HepG2 (cell line): ENCODE measurements at regions of chr3 and their contacts with region 1.

Region 1: DNA sequence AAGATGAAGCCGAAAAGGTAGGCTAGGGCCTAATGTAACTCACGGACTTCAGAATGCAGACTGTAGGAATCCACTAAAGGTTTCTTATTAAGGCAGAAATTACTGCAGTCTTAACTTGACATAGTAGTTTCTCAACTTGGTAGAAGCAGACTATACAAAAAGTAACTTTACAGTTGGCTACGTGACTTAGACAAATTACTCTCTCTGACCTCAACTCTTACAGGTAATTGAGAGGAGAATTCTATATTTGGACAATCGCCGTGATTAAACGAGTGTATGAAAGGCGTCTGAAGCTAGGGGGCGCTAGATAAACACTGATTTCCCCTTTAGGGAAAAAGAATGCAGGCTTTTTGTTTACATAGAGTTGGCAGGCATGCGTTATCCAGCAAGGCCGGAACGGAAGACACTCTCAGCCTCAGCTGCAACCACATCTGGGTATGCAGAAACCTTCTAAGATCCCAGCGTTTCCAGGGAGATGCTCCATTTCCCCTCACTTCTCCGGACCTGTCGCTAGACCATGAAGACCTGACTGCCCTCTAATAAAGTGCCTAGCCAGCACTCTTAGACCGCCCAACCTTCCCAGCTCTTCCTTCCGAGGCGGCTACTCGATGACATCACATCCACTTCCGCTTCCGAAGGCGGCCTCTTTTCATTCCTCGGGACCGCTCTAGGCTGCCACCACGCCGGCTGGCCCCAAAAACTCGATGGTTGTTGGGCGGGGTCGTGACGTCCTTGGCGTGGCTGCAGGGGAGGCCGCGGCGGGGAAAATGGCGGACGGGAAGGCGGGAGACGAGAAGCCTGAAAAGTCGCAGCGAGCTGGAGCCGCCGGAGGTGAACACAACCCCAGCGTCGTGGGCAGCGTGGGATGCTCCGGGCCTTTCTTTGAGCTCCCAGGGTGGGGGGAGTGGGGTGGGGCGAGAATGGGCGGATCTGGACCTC is at the start of gene PCNP:
- DNase-seq: peak; percentile 97
- ATAC-seq: peak; percentile 90
- H3K4me3 ChIP-seq: peak within 1 kb of the TSS; percentile 83 to 98 (median 97)
- H3K27ac ChIP-seq: peak within 1 kb of the TSS; percentile 89
- H3K4me1 ChIP-seq: peaks cover 57% of the 10 kb centered on the region
- H3K27me3 ChIP-seq: no peaks in the 10 kb centered on the region; a peak in 1 of 5 replicates
- CTCF ChIP-seq: peak; percentile 80
- EP300 ChIP-seq: no peak; a peak in 3 of 4 replicates
- POLR2A ChIP-seq: peak; percentile 90 to 92
- RAD21 ChIP-seq: peak; percentile 65
- total RNA-seq, gene PCNP: 78.2 and 112 TPM in 2 replicates

Region 2: GRCh38 chr3:101466465-101467309 is 107.0 kb before region 1 on chr3:
- CTCF ChIA-PET with region 1: no interaction called
- POLR2A ChIA-PET with region 1: interaction called, 14 read pairs
- in situ Hi-C with region 1: no loop called
- intact Hi-C with region 1: no loop called
- DNase-seq: peak; percentile 53
- ATAC-seq: peak; percentile 97
- H3K4me3 ChIP-seq: peak overlapping the region; percentile 54 to 71 (median 70)
- H3K27ac ChIP-seq: peak overlapping the region; percentile 69
- H3K4me1 ChIP-seq: peaks cover 26% of the 10 kb centered on the region
- H3K27me3 ChIP-seq: no peaks in the 10 kb centered on the region
- CTCF ChIP-seq: no peak
- EP300 ChIP-seq: no peak
- POLR2A ChIP-seq: peak; percentile 25 to 44; a peak in 2 of 4 replicates
- RAD21 ChIP-seq: no peak

Region 3: DNA sequence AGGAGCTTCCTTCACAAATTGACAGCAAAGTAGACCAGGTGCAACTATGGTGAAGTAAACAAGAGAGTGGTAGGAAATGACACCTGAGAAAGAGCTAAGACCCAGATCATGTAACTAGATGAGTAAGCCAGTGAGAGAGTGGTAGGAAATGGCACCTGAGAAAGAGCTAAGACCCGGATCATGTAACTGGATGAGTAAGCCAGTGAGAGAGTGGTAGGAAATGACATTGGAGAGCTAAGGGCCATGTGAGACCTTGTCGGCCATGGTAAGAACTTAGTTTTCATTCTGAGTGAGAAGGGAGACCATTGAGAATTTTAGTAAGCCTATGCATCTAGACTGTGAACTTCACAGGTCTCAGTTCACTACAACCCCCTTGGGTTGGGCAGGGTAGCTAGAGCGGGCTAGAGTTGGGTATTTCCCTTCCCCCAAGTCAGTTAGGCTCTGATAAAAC is 55.3 kb before region 1 on chr3:
- CTCF ChIA-PET with region 1: no interaction called
- POLR2A ChIA-PET with region 1: interaction called, 25 read pairs
- in situ Hi-C with region 1: loop called (anchors 5 kb)
- intact Hi-C with region 1: loop called (anchors 1 kb)
- DNase-seq: peak; percentile 29
- ATAC-seq: peak; percentile 64
- H3K4me3 ChIP-seq: no peak overlapping the region; a peak in 1 of 6 replicates
- H3K27ac ChIP-seq: no peak overlapping the region
- H3K4me1 ChIP-seq: peaks cover 45% of the 10 kb centered on the region
- H3K27me3 ChIP-seq: no peaks in the 10 kb centered on the region
- CTCF ChIP-seq: no peak
- EP300 ChIP-seq: no peak
- POLR2A ChIP-seq: no peak
- RAD21 ChIP-seq: no peak

Region 4: DNA sequence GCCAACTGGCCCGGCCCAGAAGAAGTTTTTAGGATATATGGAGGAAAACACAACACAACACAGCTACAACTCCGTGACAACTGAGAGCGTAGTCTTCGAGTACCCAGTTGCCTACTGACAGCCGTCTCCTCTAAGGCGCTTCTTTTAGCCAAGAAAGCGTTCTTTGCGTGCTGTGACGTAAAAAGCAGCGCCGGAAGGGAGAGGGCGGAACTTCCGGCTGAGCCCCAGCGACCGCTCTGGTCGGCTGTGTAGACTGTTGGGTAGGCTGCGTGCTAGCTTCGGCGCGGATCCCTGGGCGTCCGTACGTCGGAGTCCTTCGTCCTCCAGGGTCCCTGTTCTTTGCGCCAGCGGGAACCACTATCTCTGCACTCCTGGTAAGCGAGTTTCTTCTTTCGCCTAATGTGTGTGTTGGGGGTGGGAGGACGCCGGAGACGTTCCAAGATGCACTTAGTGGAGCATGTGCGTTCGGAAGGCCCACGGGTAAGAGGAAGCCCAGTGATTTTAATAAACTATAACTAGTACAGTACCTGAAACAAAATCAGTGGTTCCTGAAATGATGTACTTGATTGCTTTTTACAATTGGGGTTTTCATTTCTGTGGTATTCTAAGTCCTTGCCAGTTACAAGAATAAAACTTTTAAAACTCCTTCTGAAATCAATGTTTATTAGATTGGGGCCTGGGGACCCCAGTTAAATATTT is 11.9 kb before region 1 on chr3 and contains the start of gene TRMT10C:
- CTCF ChIA-PET with region 1: no interaction called
- POLR2A ChIA-PET with region 1: interaction called, 38 read pairs
- in situ Hi-C with region 1: no loop called
- intact Hi-C with region 1: no loop called
- DNase-seq: peak; percentile 80
- ATAC-seq: peak; percentile 100
- H3K4me3 ChIP-seq: peak within 1 kb of the TSS; percentile 76 to 91 (median 87)
- H3K27ac ChIP-seq: peak within 1 kb of the TSS; percentile 84
- H3K4me1 ChIP-seq: peaks cover 40% of the 10 kb centered on the region
- H3K27me3 ChIP-seq: no peaks in the 10 kb centered on the region; a peak in 2 of 5 replicates
- CTCF ChIP-seq: peak; percentile 8; the same call in 1 of the 2 replicates
- EP300 ChIP-seq: 0 out of 4 replicates have a peak, but pooled peaks of 1 of the 2 experiments have one; percentile 26
- POLR2A ChIP-seq: peak; percentile 94
- RAD21 ChIP-seq: peak; percentile 28; the same call in 1 of the 2 replicates
- total RNA-seq, gene TRMT10C: 39.2 and 58.8 TPM in 2 replicates

Region 5: DNA sequence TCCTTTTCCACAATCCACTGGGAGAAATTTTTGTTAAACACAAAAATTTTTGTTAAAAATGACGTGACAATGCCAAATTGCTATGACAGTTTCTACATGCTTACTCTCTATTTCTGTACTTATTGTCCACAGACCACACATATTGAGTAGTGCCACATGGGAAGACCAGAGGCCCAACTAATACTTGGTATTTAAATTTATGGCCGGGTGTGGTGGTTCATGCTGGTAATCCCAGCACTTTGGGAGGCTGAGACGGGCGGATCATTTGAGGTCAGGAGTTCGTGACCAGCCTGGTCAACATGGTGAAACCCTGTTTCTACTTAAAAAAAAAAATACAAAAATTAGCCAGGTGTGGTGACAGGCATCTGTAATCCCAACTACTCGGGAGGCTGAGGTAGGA is 82.9 kb after region 1 on chr3:
- CTCF ChIA-PET with region 1: no interaction called
- POLR2A ChIA-PET with region 1: no interaction called
- in situ Hi-C with region 1: no loop called
- intact Hi-C with region 1: no loop called
- DNase-seq: no peak
- ATAC-seq: no peak
- H3K4me3 ChIP-seq: no peak overlapping the region
- H3K27ac ChIP-seq: no peak overlapping the region
- H3K4me1 ChIP-seq: no peaks in the 10 kb centered on the region
- H3K27me3 ChIP-seq: no peaks in the 10 kb centered on the region
- CTCF ChIP-seq: no peak
- EP300 ChIP-seq: no peak
- POLR2A ChIP-seq: no peak
- RAD21 ChIP-seq: no peak

Region 6: GRCh38 chr3:101676765-101677435 is 103.2 kb after region 1 on chr3 and contains the start of gene ZBTB11:
- CTCF ChIA-PET with region 1: interaction called, 3 read pairs
- POLR2A ChIA-PET with region 1: interaction called, 29 read pairs
- in situ Hi-C with region 1: no loop called
- intact Hi-C with region 1: no loop called
- DNase-seq: peak; percentile 99
- ATAC-seq: peak; percentile 81
- H3K4me3 ChIP-seq: peak within 1 kb of the TSS; percentile 85 to 94 (median 92)
- H3K27ac ChIP-seq: peak within 1 kb of the TSS; percentile 91
- H3K4me1 ChIP-seq: peaks cover 47% of the 10 kb centered on the region
- H3K27me3 ChIP-seq: no peaks in the 10 kb centered on the region
- CTCF ChIP-seq: peak; percentile 71
- EP300 ChIP-seq: no peak
- POLR2A ChIP-seq: peak; percentile 48 to 78
- RAD21 ChIP-seq: no peak; the same call in 1 of the 2 replicates
- total RNA-seq, gene ZBTB11: 18.1 and 24.6 TPM in 2 replicates